SK-N-SH (cell line): ENCODE measurements at regions of chr16 and their contacts with region 1.

Region 1: GRCh38 chr16:31142109-31143010 is 6.8 kb upstream of the PRSS8 start:
- DNase-seq: peak; percentile 100
- H3K4me3 ChIP-seq: peak overlapping the region; percentile 46 to 62
- H3K27ac ChIP-seq: peak overlapping the region; percentile 62 to 78
- H3K4me1 ChIP-seq: peaks cover 12 to 22% of the 10 kb centered on the region in 2 experiments; a peak in 2 of 4 replicates
- H3K27me3 ChIP-seq: no peaks in the 10 kb centered on the region
- CTCF ChIP-seq: peak; percentile 80
- EP300 ChIP-seq: no peak
- RAD21 ChIP-seq: peak; percentile 74

Region 2: GRCh38 chr16:30893744-30894539 is 248.4 kb before region 1 on chr16 and contains the start of gene BCL7C:
- CTCF ChIA-PET with region 1: no interaction called
- POLR2A ChIA-PET with region 1: no interaction called
- DNase-seq: peak; percentile 96
- H3K4me3 ChIP-seq: peak within 1 kb of the TSS; percentile 75 to 88
- H3K27ac ChIP-seq: peak within 1 kb of the TSS; percentile 77 to 99
- H3K4me1 ChIP-seq: peaks cover 12 to 29% of the 10 kb centered on the region in 2 experiments; a peak in 3 of 4 replicates
- H3K27me3 ChIP-seq: no peaks in the 10 kb centered on the region
- CTCF ChIP-seq: peak; percentile 47
- EP300 ChIP-seq: no peak
- RAD21 ChIP-seq: 0 out of 2 replicates have a peak, but pooled peaks have one; percentile 18
- polyA plus RNA-seq, gene BCL7C: 48.5 and 56.3 TPM in 2 replicates

Region 3: DNA sequence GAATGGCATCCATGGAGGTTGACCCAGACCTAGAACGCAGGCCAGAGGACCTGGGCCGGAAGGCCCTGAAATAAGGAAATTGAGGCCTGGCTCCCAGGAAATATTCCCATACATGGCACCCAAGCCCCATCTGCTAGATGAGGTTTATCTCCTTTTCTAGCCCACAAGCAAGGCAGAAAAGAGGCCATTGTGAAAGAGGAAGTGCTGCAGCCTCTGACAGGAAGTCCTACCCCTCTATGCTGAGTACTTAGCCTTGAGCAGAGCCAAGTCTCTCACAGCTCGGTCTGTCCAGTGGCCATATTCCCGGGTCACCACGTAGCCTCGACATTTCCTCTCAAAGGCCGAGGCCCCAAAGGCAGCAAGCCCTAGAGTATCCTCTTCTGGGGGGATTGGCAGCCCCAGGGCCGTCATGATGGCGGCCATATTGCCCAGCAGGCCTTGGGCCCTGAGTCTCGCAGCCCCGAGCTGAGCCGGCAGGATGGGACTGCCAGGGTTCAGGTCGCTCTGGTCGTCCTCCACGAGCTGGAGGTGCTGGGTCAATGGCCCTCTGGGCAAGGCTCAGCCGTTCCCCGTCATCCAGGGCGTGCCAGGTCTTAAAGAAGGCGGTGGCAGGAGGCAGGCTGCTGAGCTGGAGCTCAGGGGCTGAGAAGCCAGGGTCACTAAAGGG is 238.1 kb before region 1 on chr16:
- CTCF ChIA-PET with region 1: no interaction called
- POLR2A ChIA-PET with region 1: no interaction called
- DNase-seq: no peak
- H3K4me3 ChIP-seq: no peak overlapping the region
- H3K27ac ChIP-seq: peak overlapping the region; percentile 19 to 64; a peak in 3 of 4 replicates
- H3K4me1 ChIP-seq: peaks cover 5 to 12% of the 10 kb centered on the region in 2 experiments; a peak in 2 of 4 replicates
- H3K27me3 ChIP-seq: no peaks in the 10 kb centered on the region
- CTCF ChIP-seq: no peak
- EP300 ChIP-seq: no peak
- RAD21 ChIP-seq: no peak

Region 4: GRCh38 chr16:31073968-31074813 is 68.2 kb before region 1 on chr16 and contains the starts of genes ZNF646 and ZNF668:
- CTCF ChIA-PET with region 1: interaction called, 19 read pairs
- POLR2A ChIA-PET with region 1: interaction called, 15 read pairs
- DNase-seq: peak; percentile 92
- H3K4me3 ChIP-seq: peak within 1 kb of the TSS; percentile 90 to 95
- H3K27ac ChIP-seq: peak within 1 kb of the TSS; percentile 94 to 95
- H3K4me1 ChIP-seq: peaks cover 5 to 14% of the 10 kb centered on the region in 2 experiments; a peak in 3 of 4 replicates
- H3K27me3 ChIP-seq: no peaks in the 10 kb centered on the region
- CTCF ChIP-seq: no peak; the same call in 1 of the 2 replicates
- EP300 ChIP-seq: peak in 1 of 2 experiments; percentile 13; a peak in 1 of 4 replicates
- RAD21 ChIP-seq: no peak; the same call in 1 of the 2 replicates
- polyA plus RNA-seq, gene ZNF646: 2.7 and 3.4 TPM in 2 replicates
- polyA plus RNA-seq, gene ZNF668: 12.4 and 13.6 TPM in 2 replicates

Region 5: GRCh38 chr16:31094424-31095120 is 47.8 kb before region 1 on chr16 and contains the start of gene VKORC1:
- CTCF ChIA-PET with region 1: interaction called, 13 read pairs
- POLR2A ChIA-PET with region 1: interaction called, 6 read pairs
- DNase-seq: peak; percentile 93
- H3K4me3 ChIP-seq: peak within 1 kb of the TSS; percentile 68 to 100
- H3K27ac ChIP-seq: peak within 1 kb of the TSS; percentile 73 to 78
- H3K4me1 ChIP-seq: peaks cover 4 to 16% of the 10 kb centered on the region in 2 experiments; a peak in 2 of 4 replicates
- H3K27me3 ChIP-seq: no peaks in the 10 kb centered on the region
- CTCF ChIP-seq: no peak
- EP300 ChIP-seq: peak in 1 of 2 experiments; percentile 29; a peak in 1 of 4 replicates
- RAD21 ChIP-seq: no peak
- polyA plus RNA-seq, gene VKORC1: 419 and 434 TPM in 2 replicates

Region 6: GRCh38 chr16:31128711-31129567 is 13.4 kb before region 1 on chr16:
- CTCF ChIA-PET with region 1: interaction called, 17 read pairs
- POLR2A ChIA-PET with region 1: interaction called, 4 read pairs
- DNase-seq: no peak
- H3K4me3 ChIP-seq: no peak overlapping the region
- H3K27ac ChIP-seq: no peak overlapping the region
- H3K4me1 ChIP-seq: peaks cover 0 to 7% of the 10 kb centered on the region in 2 experiments; a peak in 1 of 4 replicates
- H3K27me3 ChIP-seq: no peaks in the 10 kb centered on the region
- CTCF ChIP-seq: no peak
- EP300 ChIP-seq: no peak
- RAD21 ChIP-seq: no peak

Region 7: DNA sequence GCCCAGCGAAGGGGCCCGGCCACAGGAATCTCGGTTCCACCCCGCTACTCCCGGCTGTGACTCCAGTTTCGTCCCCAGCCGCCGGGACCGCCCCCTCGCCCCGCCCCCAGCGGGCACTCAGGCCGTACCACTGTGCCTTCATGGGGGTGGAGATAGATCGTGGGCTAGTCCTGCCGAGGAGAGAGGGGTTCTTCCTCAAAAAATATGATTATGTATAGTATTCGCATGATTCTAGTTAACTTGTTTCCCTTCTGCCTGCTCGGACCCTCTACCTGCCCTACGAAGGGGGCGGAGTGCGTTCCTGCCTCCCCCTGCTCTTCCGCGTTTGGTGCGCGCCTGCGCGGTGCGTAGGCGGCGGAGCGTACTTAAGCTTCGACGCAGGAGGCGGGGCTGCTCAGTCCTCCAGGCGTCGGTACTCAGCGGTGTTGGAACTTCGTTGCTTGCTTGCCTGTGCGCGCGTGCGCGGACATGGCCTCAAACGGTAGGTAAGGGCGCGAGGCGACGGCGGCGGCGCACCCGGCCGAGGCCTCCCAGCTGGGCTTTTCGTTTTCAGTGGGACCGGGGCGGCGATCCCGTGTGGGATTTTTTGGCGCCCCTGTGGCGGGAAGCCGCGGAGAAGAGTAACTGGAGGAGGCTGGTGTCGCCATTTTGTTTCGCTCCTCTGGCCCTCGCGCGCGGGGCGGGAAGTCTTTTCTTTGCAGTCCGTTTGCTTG is 37.5 kb after region 1 on chr16 and contains the start of gene FUS:
- CTCF ChIA-PET with region 1: interaction called, 5 read pairs
- POLR2A ChIA-PET with region 1: interaction called, 24 read pairs
- DNase-seq: peak; percentile 99
- H3K4me3 ChIP-seq: peak within 1 kb of the TSS; percentile 77 to 99
- H3K27ac ChIP-seq: peak within 1 kb of the TSS; percentile 95
- H3K4me1 ChIP-seq: peaks cover 9 to 15% of the 10 kb centered on the region in 2 experiments; a peak in 2 of 4 replicates
- H3K27me3 ChIP-seq: no peaks in the 10 kb centered on the region
- CTCF ChIP-seq: no peak
- EP300 ChIP-seq: peak in 1 of 2 experiments; percentile 53; a peak in 1 of 4 replicates
- RAD21 ChIP-seq: no peak
- polyA plus RNA-seq, gene FUS: 298 and 429 TPM in 2 replicates

Region 8: DNA sequence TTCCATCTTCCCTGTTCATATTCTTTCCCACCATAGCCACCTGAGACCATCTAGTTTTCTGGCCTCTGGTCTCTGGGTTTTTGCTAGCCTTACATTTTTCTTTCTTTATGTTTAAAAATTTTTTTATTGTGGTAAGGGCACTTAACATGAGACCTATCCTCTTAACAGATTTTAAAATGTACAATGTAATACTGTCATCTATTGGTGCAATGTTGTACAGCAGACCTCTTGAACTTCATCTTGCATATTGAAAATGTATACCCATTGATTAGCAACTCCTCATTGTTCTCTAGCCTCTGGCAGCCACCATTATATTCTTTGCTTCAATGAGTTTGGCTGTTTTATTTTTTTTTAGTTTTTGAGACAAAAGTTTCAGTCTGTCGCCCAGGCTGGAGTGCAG is 156.6 kb after region 1 on chr16:
- CTCF ChIA-PET with region 1: no interaction called
- POLR2A ChIA-PET with region 1: no interaction called
- DNase-seq: no peak
- H3K4me3 ChIP-seq: no peak overlapping the region
- H3K27ac ChIP-seq: no peak overlapping the region
- H3K4me1 ChIP-seq: no peaks in the 10 kb centered on the region
- H3K27me3 ChIP-seq: peaks cover 16% of the 10 kb centered on the region; the same call in 1 of the 2 replicates
- CTCF ChIP-seq: peak; percentile 33
- EP300 ChIP-seq: no peak
- RAD21 ChIP-seq: no peak; the same call in 1 of the 2 replicates